ENCODE measurements at regions of chr1 and their contacts with region 1.

Region 1: GRCh38 chr1:98794196-98794886 is 132.8 kb downstream of the SNX7 start:
- DNase-seq: peak; percentile 74
- H3K4me3 Mint-ChIP-seq: no peak overlapping the region
- H3K27ac Mint-ChIP-seq: no peak overlapping the region
- H3K4me1 Mint-ChIP-seq: peaks cover 22% of the 10 kb centered on the region
- H3K27me3 Mint-ChIP-seq: no peaks in the 10 kb centered on the region

Region 2: GRCh38 chr1:98813738-98814309 is 19.5 kb after region 1 on chr1:
- CTCF ChIA-PET with region 1: interaction called, 6 read pairs
- intact Hi-C with region 1: loop called (anchors 1 kb)
- DNase-seq: peak; percentile 14
- H3K4me3 Mint-ChIP-seq: no peak overlapping the region
- H3K27ac Mint-ChIP-seq: peak overlapping the region; percentile 72
- H3K4me1 Mint-ChIP-seq: peaks cover 28% of the 10 kb centered on the region
- H3K27me3 Mint-ChIP-seq: no peaks in the 10 kb centered on the region

Region 3: GRCh38 chr1:98920441-98921110 is 126.2 kb after region 1 on chr1:
- CTCF ChIA-PET with region 1: interaction called, 6 read pairs
- intact Hi-C with region 1: loop called (anchors 5 kb)
- DNase-seq: no peak
- H3K4me3 Mint-ChIP-seq: no peak overlapping the region
- H3K27ac Mint-ChIP-seq: no peak overlapping the region
- H3K4me1 Mint-ChIP-seq: peaks cover 2% of the 10 kb centered on the region
- H3K27me3 Mint-ChIP-seq: no peaks in the 10 kb centered on the region

Region 4: DNA sequence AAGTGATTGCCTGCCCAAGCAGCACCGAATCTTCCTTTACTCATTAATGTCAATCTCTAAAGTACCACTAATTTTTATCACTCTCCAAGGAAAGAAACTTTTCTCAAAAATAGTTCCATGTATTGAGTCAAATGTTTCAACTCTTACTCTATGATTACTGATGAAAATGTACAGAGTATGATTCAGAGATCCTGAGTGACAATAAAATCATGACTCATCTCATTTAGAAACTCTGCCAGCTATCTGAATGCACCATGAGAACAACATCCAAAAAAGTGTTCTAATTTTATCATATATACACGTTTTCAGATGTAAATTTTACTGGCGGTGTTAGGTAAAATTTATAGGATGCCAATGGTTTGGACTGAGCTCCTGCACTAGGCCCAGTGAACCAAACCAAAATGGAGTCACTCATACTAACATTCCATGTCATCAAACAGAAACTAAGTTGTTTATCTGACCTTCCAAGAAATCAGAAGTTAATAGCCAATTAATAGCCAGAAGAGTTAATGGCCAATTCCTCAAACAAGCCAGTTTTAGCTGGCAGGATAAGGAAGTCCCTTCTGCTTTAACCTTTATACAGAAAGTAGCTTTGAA is 187.7 kb after region 1 on chr1:
- CTCF ChIA-PET with region 1: interaction called, 4 read pairs
- intact Hi-C with region 1: loop called (anchors 5 kb)
- DNase-seq: no peak
- H3K4me3 Mint-ChIP-seq: no peak overlapping the region
- H3K27ac Mint-ChIP-seq: no peak overlapping the region
- H3K4me1 Mint-ChIP-seq: peaks cover 8% of the 10 kb centered on the region
- H3K27me3 Mint-ChIP-seq: no peaks in the 10 kb centered on the region

Region 5: DNA sequence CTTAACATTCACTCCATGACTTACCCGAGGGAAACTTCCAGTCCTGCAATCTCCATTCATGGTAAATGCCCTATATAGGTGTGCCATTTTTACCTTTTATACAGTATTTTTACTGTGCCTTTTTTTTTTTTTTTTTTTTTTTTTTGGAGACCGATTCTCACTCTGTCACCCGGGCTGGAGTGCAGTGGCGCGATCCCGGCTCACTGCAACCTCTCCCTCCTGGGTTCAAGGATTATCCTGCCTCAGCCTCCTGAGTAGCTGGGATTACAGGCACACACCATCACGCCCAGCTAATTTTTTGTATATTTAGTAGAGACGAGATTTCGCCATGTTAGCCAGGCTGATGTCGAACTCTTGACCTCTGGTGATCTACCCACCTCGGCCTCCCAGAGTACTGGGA is 345.5 kb after region 1 on chr1:
- CTCF ChIA-PET with region 1: no interaction called
- intact Hi-C with region 1: loop called (anchors 5 kb)
- DNase-seq: no peak
- H3K4me3 Mint-ChIP-seq: no peak overlapping the region
- H3K27ac Mint-ChIP-seq: no peak overlapping the region
- H3K4me1 Mint-ChIP-seq: no peaks in the 10 kb centered on the region
- H3K27me3 Mint-ChIP-seq: no peaks in the 10 kb centered on the region

Region 6: GRCh38 chr1:99406656-99407417 is 612.5 kb after region 1 on chr1:
- CTCF ChIA-PET with region 1: no interaction called
- intact Hi-C with region 1: no loop called
- DNase-seq: no peak
- H3K4me3 Mint-ChIP-seq: no peak overlapping the region
- H3K27ac Mint-ChIP-seq: no peak overlapping the region
- H3K4me1 Mint-ChIP-seq: no peaks in the 10 kb centered on the region
- H3K27me3 Mint-ChIP-seq: peaks cover 3% of the 10 kb centered on the region

Region 7: DNA sequence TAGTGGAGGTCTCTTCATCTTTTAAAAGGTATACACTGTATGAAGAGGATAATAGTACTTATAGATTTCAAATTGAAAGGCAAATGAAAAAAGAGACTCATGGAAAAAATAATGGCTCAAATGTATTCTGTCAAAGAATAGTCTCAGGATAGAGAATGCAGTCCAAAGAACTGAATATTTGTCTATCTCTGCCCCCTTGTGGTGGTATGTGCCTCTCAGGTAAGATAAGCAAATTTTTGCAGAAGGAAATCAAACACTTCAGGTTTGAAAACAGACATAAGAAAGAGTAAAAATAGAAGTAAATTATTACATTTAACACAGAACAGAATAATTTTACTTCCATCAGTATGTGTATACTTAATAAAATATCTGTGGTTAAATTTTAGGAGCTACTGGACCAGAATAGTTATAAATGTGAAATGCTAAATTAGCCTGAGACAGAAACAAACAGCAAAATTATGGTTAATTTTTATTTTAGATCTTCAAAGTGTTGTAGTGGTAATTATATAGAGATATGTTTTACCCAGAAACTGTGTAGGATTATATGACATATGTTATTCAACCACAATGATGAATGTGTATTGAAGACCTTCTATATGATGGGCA is 687.2 kb after region 1 on chr1:
- CTCF ChIA-PET with region 1: interaction called, 13 read pairs
- intact Hi-C with region 1: loop called (anchors 1 kb)
- DNase-seq: peak; percentile 57
- H3K4me3 Mint-ChIP-seq: no peak overlapping the region
- H3K27ac Mint-ChIP-seq: no peak overlapping the region
- H3K4me1 Mint-ChIP-seq: no peaks in the 10 kb centered on the region
- H3K27me3 Mint-ChIP-seq: peaks cover 21% of the 10 kb centered on the region

Region 8: GRCh38 chr1:99707535-99708142 is 913.3 kb after region 1 on chr1:
- CTCF ChIA-PET with region 1: no interaction called
- intact Hi-C with region 1: loop called (anchors 1 kb)
- DNase-seq: peak; percentile 81
- H3K4me3 Mint-ChIP-seq: no peak overlapping the region
- H3K27ac Mint-ChIP-seq: no peak overlapping the region
- H3K4me1 Mint-ChIP-seq: peaks cover 2% of the 10 kb centered on the region
- H3K27me3 Mint-ChIP-seq: peaks cover 2% of the 10 kb centered on the region

Measured in activated naive CD4-positive, alpha-beta T cell treated with anti-CD3 and anti-CD28 coated beads for 36 hours (primary cell).